Right cardiac atrium (tissue), 5 donors: ENCODE measurements at regions of chr20 and their contacts with region 1.

Region 1: GRCh38 chr20:10540636-10541493 is 105.8 kb downstream of the SLX4IP start:
- DNase-seq: no peak
- ATAC-seq: peak in 1 of 2 donors; percentile 53
- H3K4me3 ChIP-seq: no peak overlapping the region
- H3K27ac ChIP-seq: no peak overlapping the region
- H3K4me1 ChIP-seq: no peaks in the 10 kb centered on the region
- H3K27me3 ChIP-seq: no peaks in the 10 kb centered on the region

Region 2: DNA sequence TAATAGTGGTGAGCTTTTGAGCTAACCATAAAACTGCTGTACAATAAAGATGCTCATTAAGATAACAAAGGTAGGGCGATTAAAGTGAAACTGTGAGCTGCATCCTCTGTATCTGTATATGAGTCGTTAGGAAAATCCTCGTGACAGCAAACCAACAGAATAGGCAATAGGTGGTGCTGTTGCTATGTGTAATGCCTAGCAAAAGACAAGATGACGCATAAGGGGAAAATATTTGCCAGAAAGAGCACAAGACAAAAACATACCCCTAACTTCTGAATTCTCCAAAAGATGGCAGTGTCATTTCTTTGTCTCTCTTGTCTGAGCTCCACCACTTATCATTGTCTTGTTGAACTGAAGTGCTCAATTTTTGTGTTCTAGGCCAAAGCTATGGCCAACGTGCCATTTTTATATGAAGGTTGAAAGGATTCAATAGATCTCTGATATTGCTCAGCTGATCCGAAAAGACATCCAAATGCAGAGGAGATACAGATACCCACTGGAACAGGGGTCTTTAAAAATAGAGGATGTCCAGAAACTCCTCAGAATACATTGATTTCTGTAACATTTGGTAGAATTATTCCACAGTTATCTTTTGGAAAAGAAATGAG is 562.4 kb before region 1 on chr20:
- intact Hi-C with region 1: loop called in 1 of 4 experiments (anchors 10 kb)
- DNase-seq: peak in 1 of 3 donors; percentile 7
- ATAC-seq: peak; percentile 90 to 93
- H3K4me3 ChIP-seq: no peak overlapping the region
- H3K27ac ChIP-seq: no peak overlapping the region
- H3K4me1 ChIP-seq: no peaks in the 10 kb centered on the region
- H3K27me3 ChIP-seq: no peaks in the 10 kb centered on the region

Region 3: DNA sequence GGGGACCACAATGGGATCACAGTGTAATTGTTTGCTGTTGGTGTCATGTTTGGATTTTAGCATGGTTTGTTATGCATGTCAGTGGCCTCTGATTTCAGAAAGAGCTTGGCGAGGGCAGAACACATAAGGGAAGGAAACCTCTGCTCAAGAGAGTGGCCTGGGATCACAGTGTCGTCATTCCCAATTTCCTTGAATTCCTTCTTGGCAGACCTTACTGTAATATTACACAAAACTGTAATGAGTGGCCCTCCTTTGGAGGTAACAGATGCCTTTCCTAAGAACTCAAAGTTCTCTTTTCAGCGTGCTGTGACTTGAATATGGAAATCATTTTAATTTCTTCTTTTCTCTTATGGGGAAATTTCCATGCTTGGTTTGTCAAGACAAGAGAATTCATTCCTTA is 86.0 kb after region 1 on chr20:
- intact Hi-C with region 1: no loop called
- DNase-seq: no peak
- ATAC-seq: peak; percentile 53 to 76
- H3K4me3 ChIP-seq: no peak overlapping the region
- H3K27ac ChIP-seq: no peak overlapping the region
- H3K4me1 ChIP-seq: peaks cover 3% of the 10 kb centered on the region
- H3K27me3 ChIP-seq: no peaks in the 10 kb centered on the region